ENCODE measurements at regions of chr2 and their contacts with region 1.

Region 1: DNA sequence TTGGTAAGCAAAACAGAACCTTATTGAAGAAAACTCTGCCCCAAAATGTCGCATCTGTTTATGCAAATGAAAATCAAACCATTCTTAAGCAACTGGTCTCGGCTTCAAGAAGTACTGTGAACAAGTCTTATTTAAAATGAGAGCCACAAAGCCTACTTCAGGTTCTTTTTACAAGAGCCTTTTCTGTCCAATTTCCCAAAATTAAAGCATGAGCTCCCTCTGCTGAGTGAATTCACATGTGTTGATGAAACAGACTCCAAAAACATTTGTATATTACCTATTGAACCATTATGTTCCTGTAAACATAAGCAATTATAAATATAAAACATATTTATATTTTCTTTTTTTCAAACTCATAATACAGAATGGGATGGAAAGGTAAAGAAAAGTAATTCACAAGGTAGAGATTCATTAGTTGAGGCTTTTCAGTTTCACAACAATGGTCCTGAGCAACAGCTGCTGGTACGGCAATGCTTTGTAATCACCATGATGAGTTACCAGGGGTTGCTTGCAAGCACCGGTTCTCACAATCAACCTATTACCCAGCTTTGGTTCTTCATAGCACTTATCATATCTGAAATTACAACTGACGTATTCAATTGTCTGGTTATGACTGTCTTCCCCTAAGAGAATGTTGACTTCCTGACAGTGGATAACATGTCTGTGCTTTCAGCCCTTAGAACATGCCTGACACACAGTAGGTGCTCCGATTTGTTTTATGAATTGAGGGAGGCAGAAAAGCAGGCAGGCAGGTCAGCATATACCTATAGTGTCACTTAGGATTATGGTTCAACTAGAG is 108.4 kb upstream of the BZW1 start:
- DNase-seq: peak; percentile 71
- H3K4me3 Mint-ChIP-seq: peak overlapping the region; percentile 27
- H3K27ac Mint-ChIP-seq: peak overlapping the region; percentile 81
- H3K4me1 Mint-ChIP-seq: peaks cover 72% of the 10 kb centered on the region
- H3K27me3 Mint-ChIP-seq: peaks cover 6% of the 10 kb centered on the region

Region 2: GRCh38 chr2:199979832-199980628 is 723.3 kb before region 1 on chr2:
- CTCF ChIA-PET with region 1: no interaction called
- POLR2A ChIA-PET with region 1: no interaction called
- intact Hi-C with region 1: loop called (anchors 1 kb)
- DNase-seq: peak; percentile 88
- H3K4me3 Mint-ChIP-seq: no peak overlapping the region
- H3K27ac Mint-ChIP-seq: no peak overlapping the region
- H3K4me1 Mint-ChIP-seq: peaks cover 23% of the 10 kb centered on the region
- H3K27me3 Mint-ChIP-seq: no peaks in the 10 kb centered on the region

Region 3: DNA sequence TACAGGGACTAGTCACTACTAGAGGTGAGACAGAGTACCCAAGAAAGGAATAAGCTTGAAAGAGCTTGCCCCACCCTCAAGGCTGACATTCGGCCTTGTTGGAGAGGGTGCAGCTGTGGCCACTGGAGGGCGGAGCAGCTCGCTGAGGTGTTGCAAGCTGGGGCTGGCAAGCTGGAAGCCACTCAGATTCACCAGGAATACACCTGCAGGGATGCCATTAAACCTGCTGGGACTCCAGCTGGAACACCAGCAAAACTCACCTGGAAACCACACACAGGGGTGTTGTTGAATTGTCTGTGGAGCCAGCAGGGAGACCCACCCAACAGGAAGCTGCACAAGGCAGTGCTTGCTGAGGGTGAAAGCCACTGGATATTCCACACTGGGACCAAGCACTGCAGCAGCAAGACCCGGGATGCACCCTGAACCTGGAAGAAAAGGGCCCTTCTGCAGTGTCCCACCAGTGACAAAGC is 219.6 kb before region 1 on chr2:
- CTCF ChIA-PET with region 1: no interaction called
- POLR2A ChIA-PET with region 1: no interaction called
- intact Hi-C with region 1: loop called (anchors 2 kb)
- DNase-seq: peak; percentile 66
- H3K4me3 Mint-ChIP-seq: no peak overlapping the region
- H3K27ac Mint-ChIP-seq: no peak overlapping the region
- H3K4me1 Mint-ChIP-seq: peaks cover 18% of the 10 kb centered on the region
- H3K27me3 Mint-ChIP-seq: no peaks in the 10 kb centered on the region

Region 4: DNA sequence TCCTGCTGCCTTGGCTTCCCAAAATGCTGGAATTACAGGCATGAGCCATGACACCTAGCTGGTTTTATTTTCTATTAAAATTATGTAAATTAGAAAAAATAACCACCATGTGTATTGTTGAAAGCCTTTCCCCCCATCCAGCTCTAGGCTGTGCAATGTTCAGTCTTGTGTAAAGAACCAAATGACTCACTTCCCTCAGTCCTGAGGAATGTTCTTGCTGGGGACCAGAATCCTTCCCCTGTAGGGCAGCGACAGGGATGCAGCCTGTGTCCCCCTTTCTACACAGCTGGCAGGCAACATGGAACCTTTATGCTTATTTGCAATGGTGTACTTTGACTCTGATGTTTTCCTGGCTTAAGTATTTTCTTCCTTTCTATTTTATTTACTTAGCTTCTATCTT is 88.1 kb before region 1 on chr2:
- CTCF ChIA-PET with region 1: interaction called, 4 read pairs
- POLR2A ChIA-PET with region 1: no interaction called
- intact Hi-C with region 1: loop called (anchors 2 kb)
- DNase-seq: no peak
- H3K4me3 Mint-ChIP-seq: no peak overlapping the region
- H3K27ac Mint-ChIP-seq: no peak overlapping the region
- H3K4me1 Mint-ChIP-seq: peaks cover 16% of the 10 kb centered on the region
- H3K27me3 Mint-ChIP-seq: peaks cover 8% of the 10 kb centered on the region

Region 5: DNA sequence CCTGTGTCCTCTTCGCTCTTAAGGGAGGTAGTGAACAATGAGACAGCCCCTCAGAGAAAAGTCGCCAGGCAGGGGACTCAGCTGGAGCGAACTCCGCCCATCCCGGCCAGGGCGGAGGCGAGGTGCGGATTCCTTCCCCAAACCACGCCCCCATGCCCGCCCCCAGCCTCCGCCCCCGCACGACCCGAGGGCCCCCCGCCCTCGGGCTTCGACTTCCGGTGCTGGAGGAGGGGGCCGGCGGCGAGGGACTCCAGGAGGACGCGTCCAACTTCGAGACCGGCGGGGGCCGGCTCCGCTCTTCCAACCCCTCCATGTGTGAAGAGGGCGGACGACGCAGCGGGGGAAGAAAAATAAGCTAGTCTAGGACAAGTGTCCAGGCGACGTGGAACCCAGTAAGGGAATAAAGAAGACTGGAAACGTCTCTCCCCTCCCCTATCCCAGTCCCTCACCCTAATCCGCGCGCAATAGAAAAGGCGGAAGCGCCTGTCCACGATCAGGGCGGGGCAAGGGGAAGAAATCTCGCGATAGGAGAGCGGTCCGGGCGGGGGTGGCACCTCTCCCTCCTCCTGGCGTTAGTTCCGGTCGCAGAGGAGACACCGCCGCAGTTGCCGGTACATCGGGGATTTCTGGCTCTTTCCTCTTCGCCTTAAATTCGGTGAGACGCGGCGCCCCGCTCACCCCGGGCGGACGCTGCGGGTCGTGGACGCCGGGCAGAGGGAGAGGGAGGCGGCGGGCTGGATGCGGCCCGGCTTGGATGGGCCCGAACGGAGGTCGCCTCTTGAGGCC is 108.2 kb after region 1 on chr2 and contains the start of gene BZW1:
- CTCF ChIA-PET with region 1: interaction called, 5 read pairs
- POLR2A ChIA-PET with region 1: interaction called, 13 read pairs
- intact Hi-C with region 1: loop called (anchors 1 kb)
- DNase-seq: peak; percentile 98
- H3K4me3 Mint-ChIP-seq: peak within 1 kb of the TSS; percentile 100
- H3K27ac Mint-ChIP-seq: peak within 1 kb of the TSS; percentile 100
- H3K4me1 Mint-ChIP-seq: peaks cover 44% of the 10 kb centered on the region
- H3K27me3 Mint-ChIP-seq: peaks cover 1% of the 10 kb centered on the region
- total RNA-seq, gene BZW1: 416 to 423 TPM

Region 6: GRCh38 chr2:201071479-201072200 is 368.3 kb after region 1 on chr2 and contains the starts of genes HYCC2 and NDUFB3:
- CTCF ChIA-PET with region 1: no interaction called
- POLR2A ChIA-PET with region 1: no interaction called
- intact Hi-C with region 1: loop called (anchors 2 kb)
- DNase-seq: peak; percentile 95
- H3K4me3 Mint-ChIP-seq: peak within 1 kb of the TSS; percentile 91
- H3K27ac Mint-ChIP-seq: peak within 1 kb of the TSS; percentile 86
- H3K4me1 Mint-ChIP-seq: peaks cover 52% of the 10 kb centered on the region
- H3K27me3 Mint-ChIP-seq: no peaks in the 10 kb centered on the region
- total RNA-seq, gene HYCC2: 18.9 to 20.5 TPM
- total RNA-seq, gene NDUFB3: 158 to 162 TPM

Region 7: DNA sequence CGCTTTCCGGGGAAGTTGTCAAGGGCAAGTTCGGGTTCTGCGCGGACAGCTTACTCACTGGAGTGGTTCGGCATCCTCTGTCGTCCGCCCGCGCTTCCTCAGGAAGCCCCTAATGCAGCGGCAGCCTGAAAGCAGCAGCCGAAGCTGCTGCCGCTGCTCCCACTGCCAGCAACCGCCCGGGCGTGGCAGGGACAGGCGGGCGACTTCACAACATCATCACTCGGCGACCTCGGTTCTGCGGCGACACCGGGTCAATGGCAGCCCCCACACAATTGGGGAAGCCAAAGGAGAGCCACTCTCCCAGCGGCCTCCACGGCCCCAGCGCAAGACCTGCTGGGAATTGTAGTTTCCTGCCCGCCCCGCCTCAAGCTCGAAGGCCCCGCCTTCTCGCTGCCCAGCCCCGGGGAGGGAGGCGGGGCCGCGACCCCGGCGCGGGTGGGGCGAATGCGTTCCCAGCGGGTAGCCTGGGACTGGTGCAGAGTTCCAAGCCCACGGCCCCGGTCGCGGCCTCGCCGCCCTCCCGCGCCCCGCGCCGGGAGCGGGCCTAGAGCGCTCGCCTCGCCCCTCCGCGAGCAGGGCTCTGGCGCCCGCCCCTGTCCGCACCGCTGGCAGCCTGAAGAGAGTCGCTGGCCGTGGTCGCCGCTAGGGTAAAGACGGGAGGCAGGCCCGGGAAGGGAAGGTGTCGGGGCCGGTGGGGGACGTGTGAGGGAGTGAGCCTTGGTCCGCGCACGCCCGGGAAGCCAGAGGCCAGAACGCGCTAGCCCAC is 748.1 kb after region 1 on chr2 and contains the starts of genes STRADB and TRAK2:
- CTCF ChIA-PET with region 1: no interaction called
- POLR2A ChIA-PET with region 1: no interaction called
- intact Hi-C with region 1: loop called (anchors 2 kb)
- DNase-seq: peak; percentile 98
- H3K4me3 Mint-ChIP-seq: peak within 1 kb of the TSS; percentile 96
- H3K27ac Mint-ChIP-seq: peak within 1 kb of the TSS; percentile 97
- H3K4me1 Mint-ChIP-seq: peaks cover 44% of the 10 kb centered on the region
- H3K27me3 Mint-ChIP-seq: no peaks in the 10 kb centered on the region
- total RNA-seq, gene STRADB: 18.5 to 19.8 TPM
- total RNA-seq, gene TRAK2: 23.5 to 26.0 TPM

Measured in activated CD4-positive, alpha-beta memory T cell treated with anti-CD3 and anti-CD28 coated beads for 36 hours (primary cell).